Activated naive CD4-positive, alpha-beta T cell treated with anti-CD3 and anti-CD28 coated beads for 36 hours (primary cell): ENCODE measurements at regions of chr16 and their contacts with region 1.

Region 1: GRCh38 chr16:84617791-84618580 is at the start of gene COTL1:
- DNase-seq: peak; percentile 96
- H3K4me3 Mint-ChIP-seq: peak within 1 kb of the TSS; percentile 96
- H3K27ac Mint-ChIP-seq: peak within 1 kb of the TSS; percentile 77
- H3K4me1 Mint-ChIP-seq: peaks cover 35% of the 10 kb centered on the region
- H3K27me3 Mint-ChIP-seq: no peaks in the 10 kb centered on the region
- total RNA-seq, gene COTL1: 325 to 328 TPM

Region 2: GRCh38 chr16:84504420-84505248 is 113.4 kb before region 1 on chr16 and contains the start of gene MEAK7:
- CTCF ChIA-PET with region 1: interaction called, 141 read pairs
- intact Hi-C with region 1: no loop called
- DNase-seq: peak; percentile 99
- H3K4me3 Mint-ChIP-seq: peak within 1 kb of the TSS; percentile 94
- H3K27ac Mint-ChIP-seq: peak within 1 kb of the TSS; percentile 82
- H3K4me1 Mint-ChIP-seq: peaks cover 41% of the 10 kb centered on the region
- H3K27me3 Mint-ChIP-seq: no peaks in the 10 kb centered on the region
- total RNA-seq, gene MEAK7: 6.3 to 7.0 TPM

Region 3: GRCh38 chr16:84574191-84574590 is 43.8 kb before region 1 on chr16:
- CTCF ChIA-PET with region 1: interaction called, 4 read pairs
- intact Hi-C with region 1: loop called (anchors 1 kb)
- DNase-seq: no peak
- H3K4me3 Mint-ChIP-seq: no peak overlapping the region
- H3K27ac Mint-ChIP-seq: no peak overlapping the region
- H3K4me1 Mint-ChIP-seq: peaks cover 39% of the 10 kb centered on the region
- H3K27me3 Mint-ChIP-seq: no peaks in the 10 kb centered on the region

Region 4: DNA sequence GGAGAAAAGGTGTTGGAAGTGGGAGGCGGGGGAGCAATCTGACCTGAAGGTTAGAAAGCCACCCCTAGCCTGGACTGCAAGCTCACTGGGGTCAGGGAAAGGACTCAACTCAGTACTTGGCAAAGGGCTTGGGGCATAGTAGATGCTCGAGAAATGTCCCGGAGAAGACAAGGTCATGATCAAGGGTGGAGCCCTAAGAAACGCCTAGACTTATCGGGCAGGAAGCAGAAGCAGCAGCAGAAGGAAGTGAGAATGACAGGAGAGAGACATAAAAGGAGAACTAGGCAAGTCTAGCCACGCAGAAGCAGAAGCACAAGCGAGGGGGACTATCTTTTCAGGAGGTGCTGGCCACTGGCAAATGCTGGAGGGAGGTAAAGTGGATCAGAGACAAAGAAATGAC is 10.3 kb before region 1 on chr16:
- CTCF ChIA-PET with region 1: interaction called, 7 read pairs
- intact Hi-C with region 1: loop called (anchors 1 kb)
- DNase-seq: peak; percentile 38
- H3K4me3 Mint-ChIP-seq: peak overlapping the region; percentile 8
- H3K27ac Mint-ChIP-seq: peak overlapping the region; percentile 66
- H3K4me1 Mint-ChIP-seq: peaks cover 89% of the 10 kb centered on the region
- H3K27me3 Mint-ChIP-seq: no peaks in the 10 kb centered on the region

Region 5: DNA sequence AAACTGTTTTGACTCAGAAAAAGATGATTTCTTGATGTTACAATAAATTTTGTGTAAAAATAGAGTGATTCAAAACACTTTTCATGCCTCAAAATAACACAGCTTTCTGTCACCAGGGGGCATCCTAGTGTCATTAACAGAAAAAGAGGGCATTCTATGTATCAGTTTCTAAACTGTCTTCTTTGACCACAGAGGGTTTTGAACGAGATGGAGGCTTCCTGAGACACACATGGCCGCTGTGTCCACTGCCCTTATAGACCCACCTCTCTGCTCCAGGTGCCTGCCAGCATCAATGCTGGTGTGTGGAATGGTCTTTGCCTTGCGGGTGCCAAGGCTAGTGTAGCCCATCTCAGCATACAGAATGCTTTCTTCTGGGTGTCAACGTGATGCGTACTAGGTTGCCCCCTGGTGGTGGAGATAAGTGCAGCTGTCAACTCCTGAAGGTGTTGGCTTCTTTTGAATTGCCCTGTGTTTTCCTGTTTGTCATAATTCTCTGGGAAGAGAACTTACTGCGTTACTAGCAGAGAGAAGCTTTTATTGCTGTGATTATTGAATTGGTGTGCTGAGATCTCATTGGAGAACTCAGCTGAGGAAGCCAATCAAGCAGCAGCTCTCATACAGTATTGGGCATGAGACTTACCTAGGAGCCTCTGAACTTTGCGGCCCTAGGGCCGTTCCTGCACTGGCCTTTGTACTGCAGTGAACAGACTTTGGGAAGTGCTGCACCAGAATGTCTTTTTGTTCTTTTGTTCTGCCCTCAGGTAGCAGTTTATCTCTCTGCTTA is 120.5 kb after region 1 on chr16:
- CTCF ChIA-PET with region 1: interaction called, 28 read pairs
- intact Hi-C with region 1: loop called (anchors 1 kb)
- DNase-seq: peak; percentile 85
- H3K4me3 Mint-ChIP-seq: no peak overlapping the region
- H3K27ac Mint-ChIP-seq: no peak overlapping the region
- H3K4me1 Mint-ChIP-seq: peaks cover 53% of the 10 kb centered on the region
- H3K27me3 Mint-ChIP-seq: no peaks in the 10 kb centered on the region